Gastrocnemius medialis (tissue), 4 donors: ENCODE measurements at regions of chr3 and their contacts with region 1.

Region 1: DNA sequence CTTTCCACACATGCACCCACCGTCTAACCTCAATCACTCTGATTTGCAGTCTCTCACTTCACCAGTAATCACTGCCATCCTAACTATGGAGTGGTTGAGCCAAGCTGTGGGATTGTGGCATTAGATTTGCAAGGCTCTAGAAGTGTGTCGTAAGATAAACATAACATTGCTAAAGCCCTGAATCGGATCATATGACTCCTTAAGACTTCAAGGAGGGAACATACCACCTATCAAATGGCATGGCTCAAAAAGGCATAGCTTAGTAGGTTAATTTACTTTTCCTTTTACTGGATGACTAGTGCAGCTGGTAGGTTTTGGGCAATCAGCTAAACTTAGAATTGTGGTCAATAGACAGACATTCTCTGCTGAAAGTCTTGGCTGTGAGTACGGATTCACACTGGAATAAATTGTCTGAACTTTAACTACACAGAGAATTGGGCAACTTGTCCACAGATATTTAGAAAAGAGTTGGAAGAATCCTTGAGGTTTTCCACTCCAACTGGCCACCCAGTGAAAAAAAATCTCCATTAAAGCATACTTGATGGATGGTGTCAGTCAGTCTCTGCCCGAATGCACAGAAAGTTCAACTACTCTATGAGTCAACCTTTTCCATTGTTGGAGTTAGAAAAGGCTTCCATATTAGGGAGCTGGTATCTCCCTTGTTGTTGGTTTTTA is 476.7 kb upstream of the CBLB start:
- DNase-seq: peak; percentile 58 to 68
- ATAC-seq: peak; percentile 84 to 91
- H3K4me3 ChIP-seq: peak overlapping the region in 1 of 4 donors; percentile 10
- H3K27ac ChIP-seq: peak overlapping the region; percentile 74 to 83 (median 78)
- H3K4me1 ChIP-seq: peaks cover 64 to 68% of the 10 kb centered on the region in 2 donors
- H3K27me3 ChIP-seq: no peaks in the 10 kb centered on the region
- CTCF ChIP-seq: no peak
- POLR2A ChIP-seq: no peak

Region 2: DNA sequence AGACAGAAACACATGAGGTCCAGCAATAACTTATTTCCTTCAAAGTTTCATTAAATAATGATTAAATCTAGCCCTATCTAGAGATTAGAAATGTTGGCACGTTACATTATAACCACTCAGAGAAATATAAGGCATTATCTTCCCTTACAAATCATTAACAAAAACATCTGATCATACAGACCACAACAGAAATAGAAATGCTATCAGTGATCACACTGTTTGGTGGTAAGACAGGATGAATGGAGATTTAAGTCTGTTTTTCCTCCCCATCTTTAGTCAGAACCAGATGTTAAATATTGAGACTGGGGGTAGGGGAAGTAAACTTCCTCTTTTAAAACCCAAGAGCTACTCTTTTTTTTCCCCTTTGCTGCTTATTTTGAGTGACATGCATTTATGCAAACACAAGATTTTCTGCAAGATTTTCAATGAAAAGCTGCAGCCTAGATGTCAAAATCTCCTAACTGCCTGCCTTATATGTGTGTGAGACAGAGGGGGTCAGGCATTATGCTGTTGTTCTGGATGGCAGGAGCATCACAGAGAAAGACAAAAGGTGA is 547.0 kb before region 1 on chr3:
- in situ Hi-C with region 1: no loop called
- intact Hi-C with region 1: loop called (anchors 10 kb)
- DNase-seq: no peak
- ATAC-seq: no peak
- H3K4me3 ChIP-seq: no peak overlapping the region
- H3K27ac ChIP-seq: no peak overlapping the region
- H3K4me1 ChIP-seq: peaks cover 15 to 29% of the 10 kb centered on the region in 2 donors
- H3K27me3 ChIP-seq: no peaks in the 10 kb centered on the region
- CTCF ChIP-seq: no peak
- POLR2A ChIP-seq: no peak

Region 3: DNA sequence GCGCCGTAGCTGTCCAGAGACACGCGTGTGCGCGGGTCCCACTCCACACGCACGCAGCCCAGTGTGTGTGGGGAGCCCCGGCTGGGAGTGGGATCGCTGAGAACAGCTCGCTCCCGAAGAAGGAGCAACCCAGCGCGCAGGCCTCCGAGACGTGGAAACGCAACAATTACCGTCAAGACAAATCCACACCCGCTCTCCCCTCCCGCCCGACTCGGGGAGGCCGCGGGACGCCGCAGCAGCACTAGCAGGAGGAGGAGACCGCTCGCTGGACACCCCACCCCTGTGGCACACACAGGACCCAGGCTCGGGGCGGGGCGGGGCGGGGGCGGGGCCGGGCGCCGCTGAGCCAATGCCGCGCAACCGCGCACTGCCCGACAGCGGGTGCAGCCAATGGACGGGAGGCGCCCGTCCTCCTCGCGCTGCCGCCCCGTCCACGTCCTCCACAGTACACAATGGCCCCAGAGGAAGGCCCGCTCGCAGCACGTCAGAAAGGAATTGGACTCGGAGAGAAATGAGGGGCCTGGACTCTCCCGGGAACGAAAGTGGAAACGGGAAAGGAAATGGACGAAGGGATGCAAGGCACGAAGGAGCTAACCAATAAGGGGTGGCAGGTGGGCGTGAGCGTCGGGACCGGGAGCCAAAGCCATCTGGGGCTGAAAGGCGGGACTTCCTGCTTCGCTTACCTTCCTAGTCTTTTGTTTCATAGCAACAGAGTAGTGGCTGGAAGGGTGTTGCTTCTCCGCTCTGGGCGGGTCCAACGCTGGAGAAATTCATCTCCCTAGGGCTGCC is 476.6 kb before region 1 on chr3 and contains the start of gene CBLB:
- in situ Hi-C with region 1: no loop called
- intact Hi-C with region 1: loop called (anchors 2 kb)
- DNase-seq: peak; percentile 88 to 90
- ATAC-seq: peak; percentile 91 to 92
- H3K4me3 ChIP-seq: peak within 1 kb of the TSS; percentile 89 to 98 (median 96)
- H3K27ac ChIP-seq: peak within 1 kb of the TSS; percentile 93 to 98 (median 96)
- H3K4me1 ChIP-seq: peaks cover 40 to 41% of the 10 kb centered on the region in 2 donors
- H3K27me3 ChIP-seq: no peaks in the 10 kb centered on the region
- CTCF ChIP-seq: no peak
- POLR2A ChIP-seq: peak; percentile 77 to 89
- total RNA-seq, gene CBLB: 14.8 to 46.4 (median 21.6) TPM

Region 4: DNA sequence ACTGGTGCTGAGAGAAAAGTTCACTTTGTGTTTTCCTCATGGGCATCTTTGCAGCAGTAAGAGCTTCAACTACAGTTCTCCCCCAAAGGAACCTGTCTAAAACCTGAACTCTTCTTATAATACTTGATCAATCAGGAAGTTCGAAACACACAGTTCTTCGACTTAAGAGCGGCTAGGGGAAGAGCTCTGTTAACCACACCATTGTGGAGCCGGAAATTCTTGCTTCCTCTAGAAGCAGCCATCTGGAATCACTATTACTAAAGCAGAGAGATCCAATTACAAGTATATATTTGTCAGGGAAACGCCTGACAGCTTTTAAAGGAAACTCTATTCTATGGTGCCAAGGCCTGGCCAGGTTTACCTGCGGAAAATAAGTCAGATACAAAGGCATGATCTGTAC is 139.3 kb before region 1 on chr3:
- in situ Hi-C with region 1: no loop called
- intact Hi-C with region 1: loop called (anchors 5 kb)
- DNase-seq: no peak
- ATAC-seq: peak; percentile 78 to 84
- H3K4me3 ChIP-seq: peak overlapping the region in 3 of 4 donors; percentile 5 to 38 (median 6)
- H3K27ac ChIP-seq: peak overlapping the region; percentile 22 to 60 (median 41)
- H3K4me1 ChIP-seq: peaks cover 18 to 37% of the 10 kb centered on the region in 2 donors
- H3K27me3 ChIP-seq: no peaks in the 10 kb centered on the region
- CTCF ChIP-seq: no peak
- POLR2A ChIP-seq: no peak

Region 5: GRCh38 chr3:108130701-108131474 is 1785.4 kb after region 1 on chr3:
- in situ Hi-C with region 1: no loop called
- intact Hi-C with region 1: loop called (anchors 5 kb)
- DNase-seq: no peak
- ATAC-seq: peak; percentile 91 to 96
- H3K4me3 ChIP-seq: no peak overlapping the region
- H3K27ac ChIP-seq: peak overlapping the region in 3 of 4 donors; percentile 22 to 69 (median 58)
- H3K4me1 ChIP-seq: peaks cover 5 to 13% of the 10 kb centered on the region in 2 donors
- H3K27me3 ChIP-seq: no peaks in the 10 kb centered on the region
- CTCF ChIP-seq: no peak
- POLR2A ChIP-seq: no peak